Activated B cell treated with CpG ODN at 0.5 μM for 24 hours (primary cell): ENCODE measurements at regions of chr6 and their contacts with region 1.

Region 1: GRCh38 chr6:57316581-57317059 is 810 bp upstream of the PRIM2 start:
- DNase-seq: peak; percentile 66
- ATAC-seq: peak; percentile 86
- H3K4me3 Mint-ChIP-seq: peak overlapping the region; percentile 97
- H3K27ac Mint-ChIP-seq: peak overlapping the region; percentile 89
- H3K4me1 Mint-ChIP-seq: peaks cover 18% of the 10 kb centered on the region
- H3K27me3 Mint-ChIP-seq: peaks cover 9% of the 10 kb centered on the region
- CTCF ChIP-seq: peak; percentile 40

Region 2: GRCh38 chr6:56637640-56638039 is 679.0 kb before region 1 on chr6:
- CTCF ChIA-PET with region 1: interaction called, 3 read pairs
- POLR2A ChIA-PET with region 1: no interaction called
- intact Hi-C with region 1: loop called (anchors 1 kb)
- DNase-seq: no peak
- ATAC-seq: no peak
- H3K4me3 Mint-ChIP-seq: no peak overlapping the region
- H3K27ac Mint-ChIP-seq: no peak overlapping the region
- H3K4me1 Mint-ChIP-seq: no peaks in the 10 kb centered on the region
- H3K27me3 Mint-ChIP-seq: no peaks in the 10 kb centered on the region
- CTCF ChIP-seq: no peak

Region 3: GRCh38 chr6:56955171-56956045 is 361.2 kb before region 1 on chr6:
- CTCF ChIA-PET with region 1: no interaction called
- POLR2A ChIA-PET with region 1: no interaction called
- intact Hi-C with region 1: loop called (anchors 2 kb)
- DNase-seq: peak; percentile 30
- ATAC-seq: peak; percentile 47
- H3K4me3 Mint-ChIP-seq: peak overlapping the region; percentile 71
- H3K27ac Mint-ChIP-seq: no peak overlapping the region
- H3K4me1 Mint-ChIP-seq: peaks cover 25% of the 10 kb centered on the region
- H3K27me3 Mint-ChIP-seq: peaks cover 59% of the 10 kb centered on the region
- CTCF ChIP-seq: no peak

Region 4: GRCh38 chr6:57089687-57090460 is 226.7 kb before region 1 on chr6 and contains the start of gene ZNF451:
- CTCF ChIA-PET with region 1: no interaction called
- POLR2A ChIA-PET with region 1: no interaction called
- intact Hi-C with region 1: loop called (anchors 1 kb)
- DNase-seq: peak; percentile 94
- ATAC-seq: peak; percentile 92
- H3K4me3 Mint-ChIP-seq: peak within 1 kb of the TSS; percentile 86
- H3K27ac Mint-ChIP-seq: peak within 1 kb of the TSS; percentile 87
- H3K4me1 Mint-ChIP-seq: peaks cover 31% of the 10 kb centered on the region
- H3K27me3 Mint-ChIP-seq: no peaks in the 10 kb centered on the region
- CTCF ChIP-seq: no peak
- total RNA-seq, gene ZNF451: 66.9 and 71.9 TPM in 2 replicates

Region 5: GRCh38 chr6:57221936-57222742 is 94.5 kb before region 1 on chr6 and contains the start of gene RAB23:
- CTCF ChIA-PET with region 1: no interaction called
- POLR2A ChIA-PET with region 1: interaction called, 3 read pairs
- intact Hi-C with region 1: loop called (anchors 1 kb)
- DNase-seq: peak; percentile 91
- ATAC-seq: peak; percentile 89
- H3K4me3 Mint-ChIP-seq: peak within 1 kb of the TSS; percentile 99
- H3K27ac Mint-ChIP-seq: peak within 1 kb of the TSS; percentile 91
- H3K4me1 Mint-ChIP-seq: peaks cover 11% of the 10 kb centered on the region
- H3K27me3 Mint-ChIP-seq: peaks cover 9% of the 10 kb centered on the region
- CTCF ChIP-seq: no peak
- total RNA-seq, gene RAB23: 0.32 and 0.49 TPM in 2 replicates

Region 6: DNA sequence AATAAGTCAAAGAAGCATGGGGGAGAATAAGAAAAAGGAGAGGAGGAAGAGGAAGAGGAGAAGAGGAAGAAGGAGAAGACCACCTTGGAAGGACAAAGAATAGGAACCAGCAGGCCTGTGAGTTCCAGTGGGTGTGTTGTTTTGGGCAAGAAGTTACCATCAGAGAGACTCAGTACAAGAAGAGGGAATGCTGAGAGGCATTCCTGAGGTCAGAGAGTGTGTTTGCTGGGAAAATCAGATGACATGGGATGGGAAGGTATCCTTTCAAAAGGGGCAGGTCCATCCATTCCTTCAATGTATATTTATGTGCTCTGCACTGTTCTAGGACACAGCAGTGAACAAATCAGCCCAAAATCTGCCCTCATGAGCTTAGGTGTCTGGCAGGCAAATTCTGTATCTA is 39.7 kb before region 1 on chr6:
- CTCF ChIA-PET with region 1: no interaction called
- POLR2A ChIA-PET with region 1: no interaction called
- intact Hi-C with region 1: no loop called
- DNase-seq: no peak
- ATAC-seq: no peak
- H3K4me3 Mint-ChIP-seq: no peak overlapping the region
- H3K27ac Mint-ChIP-seq: no peak overlapping the region
- H3K4me1 Mint-ChIP-seq: no peaks in the 10 kb centered on the region
- H3K27me3 Mint-ChIP-seq: peaks cover 8% of the 10 kb centered on the region
- CTCF ChIP-seq: no peak